ENCODE measurements at regions of chr1 and their contacts with region 1.

Region 1: GRCh38 chr1:205631727-205632373 is at the start of gene ELK4:
- DNase-seq: peak; percentile 99
- ATAC-seq: peak; percentile 98 to 99 (median 99)
- H3K4me3 ChIP-seq: peak within 1 kb of the TSS; percentile 59 to 87 (median 71)
- H3K27ac ChIP-seq: peak within 1 kb of the TSS; percentile 87 to 98 (median 94)
- H3K4me1 ChIP-seq: peaks cover 0 to 55% (median 33%) of the 10 kb centered on the region in 9 donors
- H3K27me3 ChIP-seq: no peaks in the 10 kb centered on the region
- CTCF ChIP-seq: peak; percentile 57 to 90 (median 79)
- total RNA-seq, gene ELK4: 34.2 to 45.6 (median 40.2) TPM

Region 2: DNA sequence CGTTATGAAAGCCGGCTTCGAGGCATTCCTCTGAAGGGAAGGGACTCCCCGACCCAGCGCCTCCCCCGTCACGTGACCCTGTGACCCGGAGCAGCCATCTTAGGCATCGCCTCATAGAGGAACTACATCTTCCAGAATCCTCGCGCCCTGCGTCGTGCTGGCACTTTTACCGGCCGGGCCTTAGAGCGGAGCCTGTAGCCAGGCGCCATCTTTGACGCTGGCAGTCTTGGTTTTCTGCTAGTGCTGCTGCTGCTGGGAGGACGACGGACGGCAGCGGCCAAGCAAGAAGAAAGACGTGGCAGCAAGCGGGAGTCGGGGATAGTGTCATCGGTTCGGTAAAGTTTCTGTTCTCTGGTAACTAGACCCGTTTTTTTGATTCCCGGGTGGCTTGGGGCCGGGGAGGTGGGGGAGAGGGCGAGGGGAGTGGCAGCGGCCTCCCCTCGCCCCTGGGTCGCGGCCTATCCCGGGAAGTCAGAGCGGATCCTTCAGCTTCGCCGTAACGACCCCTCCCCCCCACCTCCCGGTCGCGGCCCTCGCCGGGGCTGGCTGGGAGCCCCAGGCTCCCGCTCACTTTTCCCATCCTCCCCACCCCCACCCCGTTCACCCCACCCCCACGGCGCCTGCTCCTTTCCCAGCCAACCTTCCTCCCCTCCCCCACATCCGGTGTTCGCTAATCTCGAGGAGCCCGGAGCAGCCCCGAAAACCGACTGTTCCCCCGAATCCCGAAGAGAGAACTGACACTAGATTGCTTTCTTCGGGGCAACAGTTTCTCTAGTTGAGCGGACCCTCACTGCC is 1836.2 kb before region 1 on chr1 and contains the starts of genes ZBED6 and ZC3H11A:
- intact Hi-C with region 1: loop called in 1 of 10 experiments (anchors 10 kb)
- DNase-seq: peak; percentile 98 to 99
- ATAC-seq: peak; percentile 97 to 99 (median 98)
- H3K4me3 ChIP-seq: peak within 1 kb of the TSS; percentile 50 to 89 (median 74)
- H3K27ac ChIP-seq: peak within 1 kb of the TSS; percentile 85 to 99 (median 97)
- H3K4me1 ChIP-seq: peaks cover 11 to 49% (median 44%) of the 10 kb centered on the region in 9 donors
- H3K27me3 ChIP-seq: no peaks in the 10 kb centered on the region
- CTCF ChIP-seq: no peak
- total RNA-seq, gene ZBED6: 11.2 to 19.4 (median 12.7) TPM
- total RNA-seq, gene ZC3H11A: 37.4 to 63.8 (median 41.9) TPM

Region 3: GRCh38 chr1:205528887-205529825 is 102.7 kb before region 1 on chr1:
- intact Hi-C with region 1: loop called in 8 of 10 experiments (anchors 1 to 10 kb)
- DNase-seq: peak; percentile 82 to 85
- ATAC-seq: peak; percentile 57 to 85 (median 79)
- H3K4me3 ChIP-seq: peak overlapping the region in 9 of 10 donors; percentile 9 to 50 (median 46)
- H3K27ac ChIP-seq: peak overlapping the region in 3 of 10 donors; percentile 11 to 47 (median 44)
- H3K4me1 ChIP-seq: peaks cover 11 to 41% (median 22%) of the 10 kb centered on the region in 9 donors
- H3K27me3 ChIP-seq: no peaks in the 10 kb centered on the region
- CTCF ChIP-seq: peak; percentile 89 to 99 (median 95)

Region 4: GRCh38 chr1:205536759-205537361 is 95.0 kb before region 1 on chr1:
- intact Hi-C with region 1: loop called in 4 of 10 experiments (anchors 5 to 10 kb)
- DNase-seq: no peak
- ATAC-seq: peak; percentile 25 to 80 (median 65)
- H3K4me3 ChIP-seq: no peak overlapping the region
- H3K27ac ChIP-seq: peak overlapping the region in 2 of 10 donors; percentile 35 to 38
- H3K4me1 ChIP-seq: peaks cover 0 to 34% (median 12%) of the 10 kb centered on the region in 9 donors
- H3K27me3 ChIP-seq: peaks cover 0 to 8% (median 0%) of the 10 kb centered on the region in 7 donors
- CTCF ChIP-seq: no peak

Region 5: DNA sequence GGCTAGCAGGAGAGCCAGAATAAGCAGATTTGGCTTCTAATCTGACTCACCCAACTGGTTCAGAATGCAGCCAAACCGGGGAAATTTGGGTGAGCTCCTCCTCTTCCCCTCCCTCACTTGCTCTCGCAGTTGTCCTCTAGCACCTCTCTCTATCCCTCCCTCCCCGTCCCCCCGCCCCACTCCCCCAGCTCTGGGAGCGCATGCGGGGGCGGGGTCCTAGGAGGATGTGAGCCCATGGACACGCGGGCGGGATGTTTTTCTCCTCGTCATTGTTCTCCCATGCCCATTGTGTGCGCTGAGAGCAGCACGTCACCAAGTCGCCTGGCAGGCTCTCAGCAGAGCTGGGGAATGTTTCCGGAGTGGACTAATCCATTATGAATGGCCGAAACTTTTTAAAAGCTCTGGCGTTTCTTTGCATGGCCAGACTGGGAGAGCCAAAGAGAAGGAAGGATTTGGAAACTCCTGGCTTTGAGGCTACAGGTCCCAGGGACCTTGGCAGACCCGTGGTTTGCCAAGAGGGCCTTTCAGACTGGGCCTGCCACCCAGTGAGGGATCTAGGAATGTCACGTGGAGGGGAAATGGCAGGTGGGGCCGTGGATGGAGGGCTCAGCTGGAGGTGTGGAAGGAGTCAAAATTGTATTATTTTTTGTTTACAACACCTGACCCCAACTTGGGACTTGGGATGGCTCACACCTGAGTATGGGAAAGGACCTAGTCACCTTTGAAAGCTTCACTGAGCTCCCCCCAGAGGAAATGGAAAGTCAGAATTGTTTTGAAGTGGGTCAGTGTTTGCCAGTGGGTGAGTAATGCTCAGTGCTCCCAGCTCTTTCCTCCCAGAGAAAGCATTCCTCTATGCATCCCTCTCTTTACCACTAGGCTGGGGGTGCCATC is 88.2 kb before region 1 on chr1:
- intact Hi-C with region 1: loop called in 3 of 10 experiments (anchors 5 to 10 kb)
- DNase-seq: peak; percentile 75 to 88
- ATAC-seq: peak; percentile 90 to 95 (median 92)
- H3K4me3 ChIP-seq: peak overlapping the region in 8 of 10 donors; percentile 4 to 46 (median 36)
- H3K27ac ChIP-seq: peak overlapping the region; percentile 49 to 90 (median 86)
- H3K4me1 ChIP-seq: peaks cover 6 to 39% (median 19%) of the 10 kb centered on the region in 9 donors
- H3K27me3 ChIP-seq: peaks cover 0 to 61% (median 7%) of the 10 kb centered on the region in 7 donors
- CTCF ChIP-seq: no peak

Region 6: DNA sequence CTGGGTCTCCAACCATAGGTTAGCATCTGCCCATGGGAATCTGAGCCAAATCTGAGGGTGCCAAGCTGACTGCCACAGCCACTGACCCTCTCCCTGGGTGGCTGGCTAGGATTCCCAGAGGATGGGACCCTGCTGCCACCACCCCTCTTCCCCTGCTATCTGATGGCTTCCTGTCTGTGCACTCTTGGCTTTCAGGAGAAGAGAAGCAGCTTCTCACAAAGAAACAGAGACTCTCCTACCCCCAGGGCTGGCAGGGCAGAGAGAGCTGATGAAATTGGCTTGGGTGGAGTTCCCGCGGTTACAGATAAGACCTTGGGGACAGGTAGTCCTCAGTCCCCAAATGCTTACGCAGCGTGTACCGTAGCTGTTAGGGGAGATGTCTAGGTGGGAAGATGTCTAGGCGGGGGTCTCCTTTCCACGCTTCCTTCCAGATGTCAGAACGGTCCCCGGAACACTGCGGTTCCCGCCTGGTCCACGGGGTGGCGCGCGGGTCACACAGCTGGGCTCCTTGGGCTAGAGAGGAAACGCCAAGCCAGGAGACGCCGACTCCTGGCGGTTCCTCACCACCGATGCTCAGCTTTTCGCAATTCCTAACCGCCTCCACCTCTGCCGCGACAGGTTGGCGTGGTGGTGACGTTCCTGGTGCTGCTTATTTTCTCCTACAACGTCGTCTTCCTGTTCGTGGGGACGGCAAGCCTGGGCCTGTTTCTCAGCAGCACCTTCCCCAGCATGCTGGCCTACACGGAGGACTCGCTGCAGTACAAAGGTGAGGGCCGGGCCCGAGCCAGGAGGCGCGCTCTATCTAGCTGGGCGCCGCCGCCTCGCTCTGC is 40.1 kb before region 1 on chr1:
- intact Hi-C with region 1: loop called in 9 of 10 experiments (anchors 1 to 5 kb)
- DNase-seq: peak; percentile 86 to 88
- ATAC-seq: peak; percentile 86 to 96 (median 93)
- H3K4me3 ChIP-seq: peak overlapping the region in 9 of 10 donors; percentile 31 to 60 (median 46)
- H3K27ac ChIP-seq: peak overlapping the region in 5 of 10 donors; percentile 9 to 51 (median 36)
- H3K4me1 ChIP-seq: peaks cover 0 to 36% (median 17%) of the 10 kb centered on the region in 9 donors
- H3K27me3 ChIP-seq: no peaks in the 10 kb centered on the region
- CTCF ChIP-seq: peak; percentile 98 to 99 (median 99)

Region 7: DNA sequence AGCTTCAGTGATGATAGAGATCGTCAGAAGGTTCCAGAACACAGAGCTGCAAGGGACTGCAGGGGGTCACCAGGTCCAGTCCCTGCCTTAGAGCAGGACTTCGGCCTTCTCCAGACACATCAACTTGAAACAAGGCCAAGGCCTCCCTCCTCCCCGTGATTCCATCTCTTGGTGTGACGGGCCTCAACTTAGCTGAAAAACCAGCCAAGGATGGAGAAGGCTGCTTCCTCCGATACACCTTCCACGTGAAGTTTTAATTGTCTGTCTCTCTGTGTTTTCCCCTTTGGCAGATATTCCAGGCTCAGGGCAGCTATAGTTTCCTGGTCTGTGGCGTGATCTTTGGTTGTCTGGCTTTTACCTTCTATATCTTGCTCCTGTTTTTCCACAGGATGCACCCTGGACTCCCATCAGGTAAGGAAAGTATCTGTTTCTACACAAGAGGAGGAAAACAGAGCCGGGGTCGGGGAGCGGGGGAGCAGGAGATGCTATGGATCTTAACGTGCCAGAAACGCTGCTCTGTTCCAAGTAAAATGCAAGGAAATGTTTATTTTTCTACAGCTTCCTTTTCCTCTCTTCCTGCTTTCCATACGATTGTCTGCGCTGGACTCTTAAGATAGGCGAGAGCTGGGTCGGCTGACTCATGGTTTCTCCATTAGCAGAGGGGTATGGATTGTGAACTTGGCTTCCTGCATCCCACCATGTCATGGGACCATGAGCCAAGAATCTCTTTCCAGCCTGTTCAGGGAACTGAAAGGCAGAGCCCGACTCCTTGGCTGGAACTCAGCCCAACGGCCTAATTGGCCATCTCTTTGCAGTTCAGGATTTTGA is 32.8 kb before region 1 on chr1:
- intact Hi-C with region 1: loop called in 5 of 10 experiments (anchors 2 to 5 kb)
- DNase-seq: peak; percentile 74 to 88
- ATAC-seq: peak; percentile 74 to 93 (median 90)
- H3K4me3 ChIP-seq: peak overlapping the region in 2 of 10 donors; percentile 7 to 16
- H3K27ac ChIP-seq: peak overlapping the region in 9 of 10 donors; percentile 20 to 83 (median 71)
- H3K4me1 ChIP-seq: peaks cover 8 to 46% (median 35%) of the 10 kb centered on the region in 9 donors
- H3K27me3 ChIP-seq: no peaks in the 10 kb centered on the region
- CTCF ChIP-seq: no peak

Region 8: GRCh38 chr1:205896320-205896719 is 264.5 kb after region 1 on chr1:
- intact Hi-C with region 1: no loop called
- DNase-seq: no peak
- ATAC-seq: no peak
- H3K4me3 ChIP-seq: no peak overlapping the region
- H3K27ac ChIP-seq: no peak overlapping the region
- H3K4me1 ChIP-seq: no peaks in the 10 kb centered on the region
- H3K27me3 ChIP-seq: peaks cover 0 to 9% (median 0%) of the 10 kb centered on the region in 7 donors
- CTCF ChIP-seq: no peak

Measured in heart right ventricle (tissue), 16 donors.